Activated T-helper 1 cell treated with anti-CD3 and anti-CD28 coated beads, Interleukin-12 subunit alpha, Interleukin-12 subunit beta, Interleukin-2, Interleukin-4 antibody, amounts not matched to agents 30 ng/mL and 10 ng/mL and 1 ng/mL, durations not matched to agents 14 hours and 24 hours and 36 hours (primary cell): ENCODE measurements at regions of chr1 and their contacts with region 1.

Region 1: GRCh38 chr1:154183045-154183915 is 8.6 kb downstream of the TPM3 start:
- DNase-seq: peak; percentile 93
- H3K4me3 Mint-ChIP-seq: peak overlapping the region; percentile 99
- H3K27ac Mint-ChIP-seq: peak overlapping the region; percentile 99
- H3K4me1 Mint-ChIP-seq: peaks cover 53% of the 10 kb centered on the region
- H3K27me3 Mint-ChIP-seq: peaks cover 6% of the 10 kb centered on the region

Region 2: DNA sequence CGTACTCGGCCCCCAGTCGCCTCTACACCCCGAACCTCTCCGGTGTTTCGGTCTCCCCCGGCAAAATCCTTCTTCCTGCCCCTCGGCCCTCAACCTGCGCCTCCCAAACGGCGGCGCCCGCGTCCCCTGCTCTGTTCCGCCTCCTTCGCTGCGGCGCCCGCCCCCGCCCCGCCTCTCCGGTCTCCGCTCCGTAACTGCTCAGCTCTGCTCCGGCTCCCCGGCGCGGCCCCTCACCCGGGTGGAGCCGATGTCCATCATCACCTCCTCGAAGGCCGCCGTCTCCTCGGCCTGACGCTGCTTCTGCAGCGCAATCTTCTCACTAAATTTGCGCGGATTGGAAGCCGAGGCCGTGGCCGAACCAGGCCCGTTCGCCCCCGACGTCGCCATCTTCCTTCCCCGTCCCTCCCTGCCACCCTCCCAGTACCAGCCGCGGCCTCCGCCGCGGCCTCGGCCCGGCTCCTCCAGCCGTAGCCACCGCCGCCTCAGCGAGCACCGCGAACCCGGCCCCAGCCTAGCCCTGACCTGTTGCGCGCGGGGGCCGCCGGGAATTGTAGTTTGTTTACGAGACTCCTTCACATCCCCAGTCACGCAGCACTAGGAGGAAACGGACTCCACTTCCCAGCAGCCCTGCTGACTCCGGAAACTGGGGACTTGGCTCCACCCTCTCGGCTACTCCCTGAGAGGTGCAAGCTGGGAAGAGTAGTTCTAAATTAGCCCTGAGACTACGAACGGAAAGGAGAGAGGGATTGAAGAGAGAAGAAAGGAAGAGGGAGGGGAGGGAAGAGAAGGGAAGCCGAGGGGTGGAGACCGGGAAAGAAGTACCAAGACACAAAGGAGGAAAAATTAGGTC is 224.9 kb before region 1 on chr1 and contains the start of gene CRTC2:
- intact Hi-C with region 1: loop called (anchors 1 kb)
- DNase-seq: peak; percentile 96
- H3K4me3 Mint-ChIP-seq: peak within 1 kb of the TSS; percentile 97
- H3K27ac Mint-ChIP-seq: peak within 1 kb of the TSS; percentile 81
- H3K4me1 Mint-ChIP-seq: peaks cover 65% of the 10 kb centered on the region
- H3K27me3 Mint-ChIP-seq: no peaks in the 10 kb centered on the region
- total RNA-seq, gene CRTC2: 62.8 and 76.4 TPM in 2 replicates

Region 3: DNA sequence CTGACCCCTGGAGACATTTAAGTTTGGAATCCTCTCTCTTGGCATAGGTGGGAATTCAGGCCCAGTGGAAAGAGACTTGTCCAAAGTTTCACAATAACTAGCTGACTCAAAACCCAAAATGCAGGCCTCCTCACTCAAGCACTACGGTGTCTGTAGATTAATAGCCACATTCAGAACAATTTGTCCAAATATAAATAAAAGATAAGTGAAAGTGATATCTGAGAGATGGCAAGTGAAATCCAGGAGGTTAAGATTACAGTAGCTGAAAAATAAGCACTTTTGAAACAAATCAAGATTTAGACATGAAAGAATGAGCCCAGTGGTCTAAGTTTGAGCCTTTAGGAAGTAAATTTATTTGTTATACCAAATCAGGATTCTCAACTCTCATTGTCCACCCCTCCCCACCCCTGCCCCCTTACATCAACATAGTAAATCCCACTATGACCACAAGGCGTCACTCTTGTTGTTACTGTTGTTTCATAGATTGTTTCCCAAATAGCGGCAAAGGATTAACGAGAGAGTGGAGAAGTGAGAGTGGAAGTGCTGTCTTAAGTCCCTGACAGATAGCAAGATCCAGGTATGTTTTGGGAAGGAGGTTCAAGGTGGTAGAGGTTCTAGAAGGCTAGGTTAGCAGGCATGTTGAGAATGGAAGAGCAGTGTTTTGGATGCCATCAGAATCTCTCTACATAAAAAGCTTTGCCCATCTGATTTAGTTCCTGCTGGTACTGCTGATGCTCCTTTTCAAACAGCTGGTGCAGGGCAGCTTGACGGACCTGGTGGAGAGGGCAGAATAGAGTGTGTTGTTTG is 15.7 kb after region 1 on chr1:
- intact Hi-C with region 1: loop called (anchors 1 kb)
- DNase-seq: no peak
- H3K4me3 Mint-ChIP-seq: no peak overlapping the region
- H3K27ac Mint-ChIP-seq: no peak overlapping the region
- H3K4me1 Mint-ChIP-seq: no peaks in the 10 kb centered on the region
- H3K27me3 Mint-ChIP-seq: peaks cover 6% of the 10 kb centered on the region

Region 4: GRCh38 chr1:154324669-154325582 is 141.6 kb after region 1 on chr1 and contains the start of gene ATP8B2:
- intact Hi-C with region 1: loop called (anchors 5 kb)
- DNase-seq: peak; percentile 74
- H3K4me3 Mint-ChIP-seq: peak within 1 kb of the TSS; percentile 96
- H3K27ac Mint-ChIP-seq: peak within 1 kb of the TSS; percentile 89
- H3K4me1 Mint-ChIP-seq: peaks cover 35% of the 10 kb centered on the region
- H3K27me3 Mint-ChIP-seq: peaks cover 22% of the 10 kb centered on the region
- total RNA-seq, gene ATP8B2: 50.1 and 54.9 TPM in 2 replicates

Region 5: GRCh38 chr1:154558575-154559465 is 375.5 kb after region 1 on chr1 and contains the start of gene UBE2Q1:
- intact Hi-C with region 1: loop called (anchors 2 kb)
- DNase-seq: peak; percentile 99
- H3K4me3 Mint-ChIP-seq: peak within 1 kb of the TSS; percentile 96
- H3K27ac Mint-ChIP-seq: peak within 1 kb of the TSS; percentile 92
- H3K4me1 Mint-ChIP-seq: peaks cover 49% of the 10 kb centered on the region
- H3K27me3 Mint-ChIP-seq: no peaks in the 10 kb centered on the region
- total RNA-seq, gene UBE2Q1: 93.3 and 106 TPM in 2 replicates